ENCODE measurements at regions of chr12 and their contacts with region 1.

Region 1: DNA sequence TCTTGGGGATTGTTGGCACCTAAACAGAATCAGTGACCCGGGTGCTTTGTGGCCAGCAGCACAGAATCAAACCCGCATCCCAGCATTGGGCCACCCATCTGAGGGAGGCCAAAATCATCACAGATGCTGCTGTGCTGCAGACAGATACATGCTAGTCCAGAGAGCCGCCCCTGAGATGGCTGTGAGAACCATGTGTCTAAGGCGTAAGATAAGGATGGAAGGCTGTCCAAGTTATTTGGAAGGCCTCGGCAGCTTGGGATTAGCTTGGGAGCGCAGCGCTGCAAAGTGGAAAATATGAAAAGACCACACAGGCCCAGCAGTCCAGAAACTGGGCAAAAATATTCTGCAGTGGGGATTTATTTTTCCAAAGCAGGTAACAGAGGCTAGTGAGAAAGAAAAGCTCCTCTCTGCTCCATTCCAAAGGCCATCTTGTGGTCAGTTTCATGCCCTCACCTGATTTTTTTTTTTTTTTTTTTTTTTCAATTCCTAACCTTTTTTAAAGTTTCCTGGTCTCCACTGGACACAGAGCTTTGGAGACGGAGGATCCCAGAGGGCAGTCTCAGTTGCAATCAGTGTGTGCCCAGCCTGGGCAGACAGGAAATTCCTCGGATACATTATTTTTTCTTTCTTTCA is 178.9 kb upstream of the BCL2L14 start:
- DNase-seq: no peak
- ATAC-seq: no peak
- H3K4me3 ChIP-seq: no peak overlapping the region
- H3K4me3 Mint-ChIP-seq: no peak overlapping the region
- H3K27ac ChIP-seq: no peak overlapping the region
- H3K27ac Mint-ChIP-seq: peak overlapping the region; percentile 24
- H3K4me1 ChIP-seq: peaks cover 3 to 4% of the 10 kb centered on the region in 2 experiments
- H3K4me1 Mint-ChIP-seq: peaks cover 15 to 18% (median 17%) of the 10 kb centered on the region in 3 donors
- H3K27me3 ChIP-seq: no peaks in the 10 kb centered on the region
- H3K27me3 Mint-ChIP-seq: no peaks in the 10 kb centered on the region

Region 2: DNA sequence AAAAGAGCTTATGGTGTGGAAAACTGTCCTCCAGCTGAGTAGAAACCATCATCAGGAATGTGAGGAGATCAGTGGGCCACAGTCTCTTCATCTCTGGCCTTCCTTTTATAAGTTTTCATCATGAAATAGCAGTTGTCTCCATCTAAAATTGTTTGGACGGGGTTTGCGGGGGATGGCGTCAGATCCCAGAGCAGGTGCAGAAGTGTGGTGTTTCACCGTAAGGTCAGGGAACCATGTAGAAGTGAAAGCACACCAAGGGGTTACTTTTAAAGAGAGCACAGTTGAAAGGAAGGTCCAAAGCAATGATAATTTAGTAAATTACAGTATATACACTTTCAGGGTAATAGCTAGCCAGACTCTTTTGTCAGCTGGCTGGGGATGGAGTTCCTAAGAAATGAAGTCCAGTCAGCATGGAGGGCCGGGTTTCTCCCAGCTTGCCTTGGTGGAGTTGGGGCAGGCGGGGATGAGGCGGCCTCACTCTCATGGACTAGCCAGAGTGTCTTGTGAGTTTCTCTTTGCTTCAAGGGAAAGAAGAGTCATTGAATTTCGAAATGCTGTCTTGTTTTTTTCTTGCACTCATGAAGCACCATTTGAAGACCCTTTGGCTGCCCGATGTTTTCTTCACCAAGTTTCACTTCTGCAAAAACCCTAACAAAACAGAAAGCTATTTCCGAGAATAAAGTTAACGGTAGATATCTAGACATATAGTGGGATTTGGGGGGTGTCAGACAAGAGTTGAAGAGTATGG is 141.8 kb before region 1 on chr12:
- CTCF ChIA-PET with region 1: no interaction called
- POLR2A ChIA-PET with region 1: interaction called in 1 of 2 experiments, 11 read pairs
- DNase-seq: no peak
- ATAC-seq: no peak
- H3K4me3 ChIP-seq: no peak overlapping the region
- H3K4me3 Mint-ChIP-seq: no peak overlapping the region
- H3K27ac ChIP-seq: no peak overlapping the region
- H3K27ac Mint-ChIP-seq: peak overlapping the region in 1 of 2 donors; percentile 17
- H3K4me1 ChIP-seq: no peaks in the 10 kb centered on the region
- H3K4me1 Mint-ChIP-seq: peaks cover 32 to 45% (median 34%) of the 10 kb centered on the region in 3 donors
- H3K27me3 ChIP-seq: no peaks in the 10 kb centered on the region
- H3K27me3 Mint-ChIP-seq: no peaks in the 10 kb centered on the region

Region 3: GRCh38 chr12:11763760-11764520 is 127.9 kb before region 1 on chr12:
- CTCF ChIA-PET with region 1: no interaction called
- POLR2A ChIA-PET with region 1: interaction called in 1 of 2 experiments, 10 read pairs
- DNase-seq: no peak
- ATAC-seq: no peak
- H3K4me3 ChIP-seq: no peak overlapping the region
- H3K4me3 Mint-ChIP-seq: no peak overlapping the region
- H3K27ac ChIP-seq: no peak overlapping the region
- H3K27ac Mint-ChIP-seq: peak overlapping the region in 1 of 2 donors; percentile 69
- H3K4me1 ChIP-seq: peaks cover 24 to 32% of the 10 kb centered on the region in 2 experiments
- H3K4me1 Mint-ChIP-seq: peaks cover 65 to 87% (median 68%) of the 10 kb centered on the region in 3 donors
- H3K27me3 ChIP-seq: no peaks in the 10 kb centered on the region
- H3K27me3 Mint-ChIP-seq: no peaks in the 10 kb centered on the region

Region 4: GRCh38 chr12:11853126-11853525 is 38.7 kb before region 1 on chr12:
- CTCF ChIA-PET with region 1: no interaction called
- POLR2A ChIA-PET with region 1: no interaction called
- DNase-seq: no peak
- ATAC-seq: no peak
- H3K4me3 ChIP-seq: no peak overlapping the region
- H3K4me3 Mint-ChIP-seq: no peak overlapping the region
- H3K27ac ChIP-seq: no peak overlapping the region
- H3K27ac Mint-ChIP-seq: no peak overlapping the region
- H3K4me1 ChIP-seq: peaks cover 5 to 6% of the 10 kb centered on the region in 2 experiments
- H3K4me1 Mint-ChIP-seq: peaks cover 11 to 21% (median 15%) of the 10 kb centered on the region in 3 donors
- H3K27me3 ChIP-seq: no peaks in the 10 kb centered on the region
- H3K27me3 Mint-ChIP-seq: no peaks in the 10 kb centered on the region

Measured in T-cell (primary cell).